GM23248 (cell line): ENCODE measurements at regions of chr14 and their contacts with region 1.

Region 1: GRCh38 chr14:24241829-24242443 is 487 bp downstream of the TINF2 start:
- DNase-seq: peak; percentile 99
- H3K4me3 ChIP-seq: peak overlapping the region; percentile 97
- H3K27ac ChIP-seq: peak overlapping the region; percentile 98
- H3K4me1 ChIP-seq: peaks cover 33% of the 10 kb centered on the region
- H3K27me3 ChIP-seq: no peaks in the 10 kb centered on the region

Region 2: DNA sequence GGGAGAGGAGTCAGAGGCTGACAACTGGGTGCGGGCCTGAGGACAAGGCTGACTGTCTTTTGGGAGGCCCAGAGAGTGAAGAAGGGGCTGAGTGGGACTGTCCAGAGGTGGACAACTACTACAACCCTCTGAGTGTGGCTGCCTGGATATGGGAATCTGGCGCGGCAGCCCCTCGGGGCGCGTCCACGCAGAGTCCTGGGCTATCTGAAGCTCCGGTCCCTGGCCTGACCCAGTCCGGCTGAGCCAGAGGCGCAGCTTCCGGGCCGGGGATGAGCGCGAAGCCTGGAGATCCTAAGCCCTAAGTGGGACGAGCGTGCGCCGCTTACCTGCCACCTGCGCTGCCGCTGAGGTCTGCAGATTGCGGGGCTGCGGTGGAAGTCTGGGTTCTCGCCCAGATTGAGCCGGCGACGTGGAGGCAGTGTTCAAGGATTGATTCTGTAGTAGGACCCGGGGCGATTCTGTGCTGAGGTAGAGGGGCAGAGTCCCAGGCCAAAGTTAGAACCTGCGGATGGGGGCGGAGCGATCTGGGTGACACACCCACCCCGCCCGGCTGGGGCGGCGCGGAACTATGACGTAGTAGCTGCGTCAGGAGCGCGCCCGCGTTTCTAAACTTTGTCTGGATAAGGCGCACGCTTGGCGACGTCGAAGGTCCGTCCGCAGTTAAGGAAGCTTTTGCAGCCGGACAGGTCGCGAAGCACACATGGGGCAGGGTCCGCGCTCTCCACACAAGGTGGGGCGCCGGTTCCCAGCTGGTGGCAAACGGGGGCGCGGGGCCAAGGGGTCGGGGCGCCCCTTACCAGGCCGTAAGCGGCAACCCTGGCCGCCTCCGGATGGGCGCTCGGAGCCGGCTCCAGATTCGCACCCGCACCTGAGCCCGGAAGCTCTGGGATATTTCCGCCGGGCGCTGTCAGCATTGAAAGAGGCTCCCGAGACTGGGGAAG is 57.6 kb after region 1 on chr14 and contains the starts of genes DHRS1 and NOP9:
- in situ Hi-C with region 1: loop called (anchors 10 kb)
- DNase-seq: peak; percentile 94
- H3K4me3 ChIP-seq: peak within 1 kb of the TSS; percentile 95
- H3K27ac ChIP-seq: peak within 1 kb of the TSS; percentile 86
- H3K4me1 ChIP-seq: peaks cover 17% of the 10 kb centered on the region
- H3K27me3 ChIP-seq: no peaks in the 10 kb centered on the region
- total RNA-seq, gene DHRS1: 12.8 and 32.1 TPM in 2 replicates
- total RNA-seq, gene NOP9: 19.3 and 23.7 TPM in 2 replicates

Region 3: DNA sequence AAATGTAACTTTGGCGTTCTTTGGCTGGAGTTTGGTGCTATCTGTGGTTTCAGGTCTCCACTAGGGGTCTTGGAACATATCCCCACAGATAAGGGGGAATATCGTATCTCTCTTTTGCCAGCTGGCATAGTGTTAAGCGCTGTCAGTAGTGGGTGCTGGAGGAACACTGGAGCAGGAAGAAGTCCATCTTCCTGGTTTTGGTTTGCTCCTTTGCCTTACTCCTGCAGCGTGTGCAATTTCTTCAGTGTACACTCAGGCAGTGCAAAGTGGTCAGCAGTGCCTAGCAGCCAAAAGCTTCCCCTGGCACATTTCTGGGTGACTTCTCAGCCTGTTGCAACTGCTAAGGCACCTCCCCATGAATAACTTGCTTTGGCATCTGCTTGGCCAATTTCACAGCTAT is 109.6 kb after region 1 on chr14:
- in situ Hi-C with region 1: no loop called
- DNase-seq: peak; percentile 89
- H3K4me3 ChIP-seq: no peak overlapping the region
- H3K27ac ChIP-seq: peak overlapping the region; percentile 57
- H3K4me1 ChIP-seq: peaks cover 25% of the 10 kb centered on the region
- H3K27me3 ChIP-seq: no peaks in the 10 kb centered on the region